ENCODE measurements at regions of chr2 and their contacts with region 1.

Region 1: GRCh38 chr2:100610381-100610831 is 47.6 kb downstream of the PDCL3 start:
- DNase-seq: peak; percentile 78
- H3K4me3 ChIP-seq: no peak overlapping the region
- H3K27ac ChIP-seq: no peak overlapping the region
- H3K4me1 ChIP-seq: no peaks in the 10 kb centered on the region
- H3K27me3 ChIP-seq: no peaks in the 10 kb centered on the region
- CTCF ChIP-seq: peak; percentile 76

Region 2: DNA sequence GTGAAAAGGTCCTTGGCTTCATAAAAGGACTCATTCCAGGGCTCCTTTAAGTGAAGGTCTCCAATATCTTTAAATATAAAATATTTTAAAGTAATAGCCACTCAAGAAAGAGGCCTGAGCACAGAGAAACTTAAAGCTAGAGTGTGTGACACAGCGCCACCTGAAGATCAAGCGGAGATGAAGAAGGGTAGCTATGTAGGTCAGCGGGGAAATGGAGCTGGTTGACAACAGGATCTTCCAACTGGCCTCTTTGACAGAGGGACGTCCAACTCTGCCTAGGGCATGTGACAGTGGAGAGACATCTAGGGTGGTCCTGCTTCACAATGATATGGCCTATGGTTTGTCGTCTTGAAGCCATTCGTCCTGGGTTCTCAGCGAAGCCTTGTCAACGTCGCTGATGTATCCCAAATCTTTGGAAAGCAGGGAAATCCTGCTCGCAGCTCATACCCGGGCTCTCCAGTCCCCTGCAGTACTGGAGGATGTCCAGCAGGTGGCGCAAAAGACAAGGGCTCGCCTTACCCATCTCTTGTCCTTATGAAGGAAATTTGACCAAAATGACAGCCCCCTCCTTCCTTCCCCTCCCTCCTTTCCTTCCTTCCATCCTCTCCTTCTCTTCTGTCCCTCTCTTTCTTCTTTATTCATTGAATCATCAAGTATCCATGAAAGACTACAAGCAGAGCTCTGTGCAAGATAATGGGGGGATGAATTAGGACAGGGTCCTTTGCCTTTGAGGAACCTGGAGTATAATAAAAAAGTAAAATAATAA is 347.7 kb before region 1 on chr2:
- CTCF ChIA-PET with region 1: no interaction called
- POLR2A ChIA-PET with region 1: no interaction called
- intact Hi-C with region 1: no loop called
- DNase-seq: peak; percentile 78
- H3K4me3 ChIP-seq: no peak overlapping the region
- H3K27ac ChIP-seq: no peak overlapping the region
- H3K4me1 ChIP-seq: no peaks in the 10 kb centered on the region
- H3K27me3 ChIP-seq: no peaks in the 10 kb centered on the region
- CTCF ChIP-seq: peak; percentile 94

Region 3: DNA sequence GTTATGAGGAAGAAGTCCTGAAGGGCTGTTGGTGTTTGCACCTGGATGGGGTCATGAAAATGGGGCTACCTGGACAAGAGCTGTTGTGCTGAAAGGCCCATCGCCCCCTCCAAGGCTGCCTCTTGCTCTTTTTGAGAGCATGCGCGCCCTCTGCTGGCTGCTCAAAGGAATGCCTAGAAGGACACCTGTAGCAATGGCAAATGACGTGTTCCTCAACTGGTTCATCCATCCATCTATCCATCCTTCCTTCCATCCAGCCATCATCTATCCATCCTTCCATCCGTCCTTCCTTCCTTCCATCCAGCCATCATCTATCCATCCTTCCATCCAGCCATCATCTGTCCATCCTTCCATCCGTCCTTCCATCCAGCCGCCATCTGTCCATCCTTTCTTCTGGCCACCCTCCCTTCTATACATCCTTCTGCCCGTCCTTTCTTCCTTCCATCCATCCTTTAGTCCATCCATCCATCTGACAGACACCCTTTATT is 374.5 kb after region 1 on chr2:
- CTCF ChIA-PET with region 1: interaction called, 7 read pairs
- POLR2A ChIA-PET with region 1: no interaction called
- intact Hi-C with region 1: loop called (anchors 1 kb)
- DNase-seq: peak; percentile 79
- H3K4me3 ChIP-seq: no peak overlapping the region
- H3K27ac ChIP-seq: no peak overlapping the region
- H3K4me1 ChIP-seq: no peaks in the 10 kb centered on the region
- H3K27me3 ChIP-seq: no peaks in the 10 kb centered on the region
- CTCF ChIP-seq: peak; percentile 88

Region 4: GRCh38 chr2:101168706-101169105 is 558.3 kb after region 1 on chr2:
- CTCF ChIA-PET with region 1: no interaction called
- POLR2A ChIA-PET with region 1: no interaction called
- intact Hi-C with region 1: no loop called
- DNase-seq: no peak
- H3K4me3 ChIP-seq: no peak overlapping the region
- H3K27ac ChIP-seq: no peak overlapping the region
- H3K4me1 ChIP-seq: no peaks in the 10 kb centered on the region
- H3K27me3 ChIP-seq: no peaks in the 10 kb centered on the region
- CTCF ChIP-seq: no peak

Measured in A673 (cell line).